ENCODE measurements at regions of chr12 and their contacts with region 1.

Region 1: DNA sequence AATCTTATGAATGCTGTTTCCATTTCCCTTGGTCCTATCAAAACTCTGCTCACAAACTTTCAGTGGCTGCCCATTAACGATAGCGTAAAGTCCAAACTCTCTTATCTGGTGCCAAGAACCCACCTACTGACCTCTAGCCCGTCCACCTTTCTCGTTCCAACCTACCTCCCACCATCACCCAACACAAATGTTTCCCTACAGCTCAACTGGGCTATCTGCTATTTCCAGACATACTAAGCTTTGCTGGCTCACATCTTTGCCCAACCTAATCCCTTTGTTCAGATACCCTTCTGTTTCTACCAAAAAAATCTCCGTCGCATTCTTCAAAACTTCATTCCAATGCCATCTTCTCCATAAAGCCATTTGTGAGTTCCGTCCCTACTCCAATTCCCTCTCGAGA is 7.6 kb upstream of the NOP2 start:
- DNase-seq: no peak
- ATAC-seq: no peak
- H3K4me3 Mint-ChIP-seq: no peak overlapping the region
- H3K27ac Mint-ChIP-seq: no peak overlapping the region
- H3K4me1 Mint-ChIP-seq: no peaks in the 10 kb centered on the region
- H3K27me3 Mint-ChIP-seq: no peaks in the 10 kb centered on the region
- CTCF ChIP-seq: no peak

Region 2: DNA sequence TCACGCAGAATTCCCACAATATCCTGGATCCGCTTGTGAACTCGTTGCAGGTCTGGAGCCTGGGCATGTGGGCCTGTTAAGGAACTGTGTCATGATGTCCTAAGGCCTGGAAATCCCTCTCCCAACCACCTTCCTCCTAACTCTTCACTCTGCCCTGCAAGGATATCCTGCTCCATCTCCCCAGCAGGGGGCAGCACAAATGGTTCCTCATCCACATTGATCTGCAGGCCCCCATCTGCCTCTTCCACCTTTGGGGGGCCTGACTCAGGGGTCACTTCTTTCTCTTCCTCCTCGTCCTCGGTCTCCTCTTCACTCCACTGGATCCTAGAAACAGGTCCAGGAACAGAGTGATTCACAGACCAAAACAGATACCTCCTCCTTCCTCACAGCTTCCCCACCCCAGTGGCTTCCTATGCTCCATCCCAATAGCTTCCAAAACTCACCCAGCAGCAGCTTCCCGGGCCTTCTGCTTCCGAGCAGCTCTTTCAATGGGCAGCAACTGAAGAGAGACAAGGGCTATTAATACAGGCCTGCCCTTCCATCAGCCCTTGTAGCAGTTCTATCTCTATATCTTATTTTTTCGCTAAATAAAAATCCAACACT is 12.1 kb before region 1 on chr12:
- CTCF ChIA-PET with region 1: interaction called, 16 read pairs
- POLR2A ChIA-PET with region 1: interaction called, 5 read pairs
- DNase-seq: peak; percentile 80
- ATAC-seq: peak; percentile 56
- H3K4me3 Mint-ChIP-seq: no peak overlapping the region
- H3K27ac Mint-ChIP-seq: no peak overlapping the region
- H3K4me1 Mint-ChIP-seq: peaks cover 7% of the 10 kb centered on the region
- H3K27me3 Mint-ChIP-seq: no peaks in the 10 kb centered on the region
- CTCF ChIP-seq: peak; percentile 39; the same call in 1 of the 2 replicates

Measured in WTC11 (cell line).